Heart right ventricle (tissue), 16 donors: ENCODE measurements at regions of chr5 and their contacts with region 1.

Region 1: DNA sequence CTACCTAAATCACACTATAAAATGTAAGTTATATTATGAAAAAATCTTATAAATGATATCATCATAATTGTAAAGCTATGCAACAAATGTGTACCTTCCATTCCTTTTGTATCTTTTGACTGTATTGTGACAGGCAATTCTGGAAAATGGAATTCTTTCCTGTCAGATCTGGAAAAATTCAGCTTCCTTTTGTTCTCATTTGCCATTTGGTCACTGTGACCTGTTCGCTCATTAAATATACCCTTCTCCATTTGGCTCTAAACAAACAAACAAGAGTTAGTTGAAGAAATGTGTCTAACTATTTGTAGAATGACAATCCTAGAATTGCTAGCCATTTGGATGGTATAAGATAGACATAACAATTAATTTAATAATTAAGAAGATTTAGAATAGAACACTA is 62.7 kb downstream of the CDKL3 start:
- DNase-seq: no peak
- ATAC-seq: no peak
- H3K4me3 ChIP-seq: no peak overlapping the region
- H3K27ac ChIP-seq: no peak overlapping the region
- H3K4me1 ChIP-seq: peaks cover 0 to 4% (median 0%) of the 10 kb centered on the region in 9 donors
- H3K27me3 ChIP-seq: no peaks in the 10 kb centered on the region
- CTCF ChIP-seq: no peak

Region 2: DNA sequence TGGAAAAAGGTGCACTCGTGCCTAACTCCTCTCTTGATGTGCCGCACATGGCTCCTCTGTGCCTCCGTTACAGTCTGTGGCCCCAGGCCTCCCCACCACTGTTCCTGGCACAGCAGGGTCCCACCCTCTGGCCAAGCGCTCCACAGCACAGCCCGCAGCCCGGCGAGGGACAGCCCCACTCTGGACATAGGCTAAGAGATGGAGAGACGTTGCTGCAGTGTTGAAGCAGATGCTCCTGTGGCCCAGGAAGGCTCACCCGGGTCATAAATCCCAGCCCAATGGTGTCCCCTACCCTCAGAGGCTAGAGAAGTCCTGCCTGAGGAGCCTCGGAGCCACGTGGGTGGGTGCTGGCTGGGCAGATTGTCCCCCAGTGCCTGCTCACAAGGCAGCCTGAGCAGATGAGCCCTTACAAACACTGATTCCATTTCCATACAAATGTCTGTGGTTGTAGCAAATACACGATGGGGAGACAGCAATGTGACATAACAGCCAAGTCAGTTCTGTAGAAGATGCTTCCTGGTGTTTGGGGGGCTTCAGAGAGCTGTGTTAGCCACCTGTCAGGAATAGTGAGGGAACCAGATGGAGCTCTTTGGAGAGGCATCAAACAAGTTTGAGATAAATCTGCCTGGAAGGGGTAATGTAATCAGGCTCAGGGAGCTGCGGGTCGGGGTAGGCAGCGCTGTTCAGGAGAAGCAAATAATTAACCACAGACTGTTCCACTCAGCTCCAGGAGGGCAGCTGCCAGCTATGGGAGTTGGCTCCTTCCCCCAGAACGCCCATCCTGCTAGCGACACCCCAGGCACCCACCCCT is 377.6 kb before region 1 on chr5:
- intact Hi-C with region 1: no loop called
- DNase-seq: no peak
- ATAC-seq: no peak
- H3K4me3 ChIP-seq: no peak overlapping the region
- H3K27ac ChIP-seq: no peak overlapping the region
- H3K4me1 ChIP-seq: peaks cover 0 to 17% (median 0%) of the 10 kb centered on the region in 9 donors
- H3K27me3 ChIP-seq: peaks cover 0 to 21% (median 0%) of the 10 kb centered on the region in 7 donors
- CTCF ChIP-seq: no peak

Region 3: GRCh38 chr5:134195666-134196065 is 108.6 kb before region 1 on chr5:
- intact Hi-C with region 1: no loop called
- DNase-seq: no peak
- ATAC-seq: no peak
- H3K4me3 ChIP-seq: no peak overlapping the region
- H3K27ac ChIP-seq: peak overlapping the region in 5 of 10 donors; percentile 35 to 55 (median 38)
- H3K4me1 ChIP-seq: peaks cover 0 to 15% (median 0%) of the 10 kb centered on the region in 9 donors
- H3K27me3 ChIP-seq: no peaks in the 10 kb centered on the region
- CTCF ChIP-seq: no peak

Region 4: DNA sequence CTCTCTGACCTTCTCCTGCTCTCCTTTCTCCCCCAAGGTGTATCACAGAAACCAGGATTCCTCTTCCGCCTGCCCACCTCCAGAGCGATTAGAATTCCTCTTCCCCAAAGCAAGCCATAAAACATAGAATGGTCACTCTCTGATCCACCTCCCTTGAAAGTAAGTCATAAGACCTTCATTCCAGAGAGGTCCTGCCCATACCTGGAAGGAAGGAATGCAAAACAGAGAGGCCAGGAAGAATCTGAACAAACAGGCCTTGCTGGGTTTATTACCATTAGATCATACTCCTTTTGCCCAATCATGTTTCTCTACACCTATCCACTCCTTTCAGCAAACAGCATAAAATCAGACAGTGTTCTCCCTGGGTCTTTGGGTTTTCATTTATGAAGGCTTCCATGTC is 41.7 kb after region 1 on chr5:
- intact Hi-C with region 1: loop called in 1 of 10 experiments (anchors 10 kb)
- DNase-seq: no peak
- ATAC-seq: no peak
- H3K4me3 ChIP-seq: no peak overlapping the region
- H3K27ac ChIP-seq: no peak overlapping the region
- H3K4me1 ChIP-seq: no peaks in the 10 kb centered on the region
- H3K27me3 ChIP-seq: no peaks in the 10 kb centered on the region
- CTCF ChIP-seq: no peak

Region 5: DNA sequence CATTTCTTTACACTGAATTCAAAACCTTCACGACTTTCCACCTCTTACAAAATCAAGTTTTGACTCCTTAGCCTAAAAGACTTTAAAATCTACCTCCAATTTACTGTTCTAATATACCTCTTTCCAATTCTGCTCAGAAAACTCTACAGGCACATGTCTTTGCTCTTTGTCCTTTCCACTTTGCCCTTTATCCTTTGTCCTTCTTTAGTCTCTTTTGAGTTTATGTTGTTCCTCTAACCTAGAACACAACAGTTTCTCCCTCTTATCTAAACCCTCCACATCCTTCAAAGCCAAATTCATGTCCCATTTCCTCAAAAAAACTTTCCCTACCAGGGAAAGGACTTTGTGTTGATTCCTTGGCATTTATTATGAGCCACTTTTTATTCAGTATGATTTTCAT is 61.3 kb after region 1 on chr5:
- intact Hi-C with region 1: loop called in 2 of 10 experiments (anchors 5 to 10 kb)
- DNase-seq: no peak
- ATAC-seq: no peak
- H3K4me3 ChIP-seq: no peak overlapping the region
- H3K27ac ChIP-seq: no peak overlapping the region
- H3K4me1 ChIP-seq: peaks cover 0 to 36% (median 25%) of the 10 kb centered on the region in 9 donors
- H3K27me3 ChIP-seq: no peaks in the 10 kb centered on the region
- CTCF ChIP-seq: no peak

Region 6: GRCh38 chr5:134394932-134395331 is 90.6 kb after region 1 on chr5:
- intact Hi-C with region 1: loop called in 1 of 10 experiments (anchors 10 kb)
- DNase-seq: no peak
- ATAC-seq: no peak
- H3K4me3 ChIP-seq: no peak overlapping the region
- H3K27ac ChIP-seq: no peak overlapping the region
- H3K4me1 ChIP-seq: peaks cover 0 to 8% (median 0%) of the 10 kb centered on the region in 9 donors
- H3K27me3 ChIP-seq: no peaks in the 10 kb centered on the region
- CTCF ChIP-seq: no peak

Region 7: DNA sequence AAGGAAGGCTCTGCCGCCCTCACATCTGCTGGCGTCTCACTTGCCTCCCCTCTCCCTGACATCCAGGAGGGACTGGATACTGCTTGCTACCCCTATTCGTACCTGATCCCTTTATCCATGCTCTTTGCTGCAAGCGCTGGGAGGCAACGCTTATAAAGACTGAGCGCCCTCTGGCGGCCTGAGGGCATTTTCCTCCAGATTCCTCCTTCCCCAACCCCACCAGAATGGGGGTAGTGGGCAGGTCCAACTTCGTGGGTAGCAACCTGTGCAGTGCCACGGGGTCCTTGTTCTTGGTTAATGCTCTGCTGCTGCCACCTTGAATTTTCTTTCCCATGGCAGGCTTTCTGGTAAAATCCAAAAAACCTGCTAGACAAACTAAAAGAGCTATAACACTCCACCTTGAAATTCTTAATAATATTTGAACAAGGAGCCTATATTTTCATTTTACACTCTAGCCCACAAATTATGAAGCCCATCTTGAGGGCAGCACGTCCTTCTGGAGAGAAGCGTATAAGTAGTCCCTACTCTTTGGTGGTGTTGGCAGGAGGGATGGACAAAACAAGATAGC is 273.6 kb after region 1 on chr5:
- intact Hi-C with region 1: loop called in 2 of 10 experiments (anchors 2 kb)
- DNase-seq: peak; percentile 74 to 85
- ATAC-seq: peak in 7 of 8 donors; percentile 36 to 65 (median 52)
- H3K4me3 ChIP-seq: no peak overlapping the region
- H3K27ac ChIP-seq: peak overlapping the region in 2 of 10 donors; percentile 41 to 48
- H3K4me1 ChIP-seq: peaks cover 16 to 63% (median 42%) of the 10 kb centered on the region in 9 donors
- H3K27me3 ChIP-seq: no peaks in the 10 kb centered on the region
- CTCF ChIP-seq: peak; percentile 65 to 91 (median 86)

Region 8: DNA sequence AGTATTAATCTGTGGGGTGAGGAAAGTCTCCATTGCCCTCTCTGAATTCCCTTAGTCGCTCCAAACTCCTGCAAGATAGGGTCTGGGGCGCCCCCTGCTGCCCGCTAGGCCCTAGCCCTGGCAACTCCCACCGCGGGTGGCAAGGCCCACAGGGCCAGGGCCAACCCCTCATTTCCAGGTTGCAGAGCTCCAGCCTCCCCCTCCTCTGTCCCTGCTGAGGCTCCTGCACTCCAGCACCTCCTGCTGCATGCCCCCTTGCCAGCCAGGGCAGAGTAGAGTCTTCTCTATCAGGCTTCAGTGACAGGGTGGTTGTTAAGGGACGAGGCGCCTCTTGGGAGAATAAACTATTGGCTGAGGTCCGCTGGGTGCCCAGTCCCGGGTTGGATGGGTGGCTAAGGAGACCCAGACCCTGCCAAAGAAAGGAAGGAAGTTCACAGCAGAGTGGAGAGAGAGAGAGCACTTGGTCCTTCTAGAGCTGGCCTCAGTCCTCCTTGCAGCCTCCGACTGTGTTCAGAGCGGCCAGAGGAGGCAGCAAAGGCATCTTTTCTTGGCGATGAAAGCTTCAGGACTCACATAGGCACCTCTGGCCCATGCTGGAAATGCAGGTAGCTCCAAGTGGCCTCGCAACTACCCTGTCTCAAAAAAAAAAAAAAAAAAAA is 282.7 kb after region 1 on chr5:
- intact Hi-C with region 1: loop called in 8 of 10 experiments (anchors 2 to 5 kb)
- DNase-seq: peak; percentile 78 to 89
- ATAC-seq: peak; percentile 82 to 93 (median 88)
- H3K4me3 ChIP-seq: peak overlapping the region in 5 of 10 donors; percentile 7 to 31 (median 15)
- H3K27ac ChIP-seq: no peak overlapping the region
- H3K4me1 ChIP-seq: peaks cover 4 to 26% (median 16%) of the 10 kb centered on the region in 9 donors
- H3K27me3 ChIP-seq: no peaks in the 10 kb centered on the region
- CTCF ChIP-seq: peak; percentile 65 to 92 (median 81)